ENCODE measurements at regions of chr15 and their contacts with region 1.

Region 1: GRCh38 chr15:32698773-32699390 is 18.9 kb upstream of the GREM1 start:
- DNase-seq: no peak
- ATAC-seq: no peak
- H3K4me3 ChIP-seq: no peak overlapping the region
- H3K27ac ChIP-seq: no peak overlapping the region
- H3K4me1 ChIP-seq: no peaks in the 10 kb centered on the region
- H3K27me3 ChIP-seq: peaks cover 0 to 15% (median 0%) of the 10 kb centered on the region in 9 donors
- CTCF ChIP-seq: no peak
- POLR2A ChIP-seq: no peak

Region 2: DNA sequence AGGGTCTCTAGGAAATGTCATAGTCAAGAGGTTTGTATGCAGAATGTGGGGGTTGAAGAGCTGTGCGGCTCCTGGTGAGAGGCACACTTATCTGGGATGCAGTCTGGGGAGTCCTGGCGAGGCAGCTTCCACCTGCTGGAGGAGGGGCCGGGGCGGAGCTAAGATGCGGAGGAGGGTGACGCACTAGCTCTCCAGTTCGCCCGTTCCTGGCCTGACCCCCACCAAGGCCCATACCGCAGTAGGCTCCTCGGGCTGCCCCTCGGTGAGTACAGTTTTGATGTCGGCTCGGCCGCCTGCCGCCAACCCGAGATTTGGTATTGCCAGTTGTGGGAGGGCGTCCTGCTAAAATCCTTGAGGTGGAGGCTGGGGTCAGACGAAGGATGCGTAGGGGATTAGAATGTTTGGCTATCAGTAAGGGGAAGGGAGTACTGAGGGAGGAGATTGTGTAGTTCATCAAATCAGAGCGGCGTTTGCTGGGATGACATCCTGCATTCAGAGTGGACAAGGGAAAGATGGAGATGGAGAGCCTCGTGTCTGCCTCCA is 57.3 kb before region 1 on chr15 and contains the start of gene SCG5:
- intact Hi-C with region 1: loop called in 1 of 10 experiments (anchors 10 kb)
- DNase-seq: peak in 1 of 5 donors; percentile 21
- ATAC-seq: peak in 2 of 4 donors; percentile 28 to 31
- H3K4me3 ChIP-seq: peak within 1 kb of the TSS in 6 of 12 donors; percentile 2 to 48 (median 24)
- H3K27ac ChIP-seq: no peak within 1 kb of the TSS
- H3K4me1 ChIP-seq: no peaks in the 10 kb centered on the region
- H3K27me3 ChIP-seq: peaks cover 0 to 27% (median 7%) of the 10 kb centered on the region in 9 donors
- CTCF ChIP-seq: no peak
- POLR2A ChIP-seq: no peak
- total RNA-seq, gene SCG5: 0.54 to 5.3 (median 1.1) TPM in 3 of 9 donors, not detected in the others